CD4-positive, alpha-beta T cell (primary cell): ENCODE measurements at regions of chr1 and their contacts with region 1.

Region 1: GRCh38 chr1:76154206-76154956 is 79.8 kb downstream of the ST6GALNAC3 start:
- DNase-seq: peak; percentile 64 to 86 (median 76)
- ATAC-seq: peak; percentile 93
- H3K4me3 ChIP-seq: peak overlapping the region; percentile 59
- H3K4me3 Mint-ChIP-seq: peak overlapping the region; percentile 85
- H3K27ac ChIP-seq: peak overlapping the region in 1 of 2 donors; percentile 52
- H3K27ac Mint-ChIP-seq: peak overlapping the region; percentile 67
- H3K4me1 ChIP-seq: peaks cover 9% of the 10 kb centered on the region
- H3K4me1 Mint-ChIP-seq: peaks cover 12% of the 10 kb centered on the region
- H3K27me3 ChIP-seq: no peaks in the 10 kb centered on the region
- H3K27me3 Mint-ChIP-seq: peaks cover 5% of the 10 kb centered on the region
- CTCF ChIP-seq: peak; percentile 90

Region 2: GRCh38 chr1:74771913-74772515 is 1382.4 kb before region 1 on chr1:
- CTCF ChIA-PET with region 1: no interaction called
- POLR2A ChIA-PET with region 1: no interaction called
- intact Hi-C with region 1: loop called in 1 of 2 experiments (anchors 5 kb)
- DNase-seq: peak in 3 of 14 experiments; percentile 31 to 43 (median 41)
- ATAC-seq: peak; percentile 49
- H3K4me3 ChIP-seq: no peak overlapping the region
- H3K4me3 Mint-ChIP-seq: no peak overlapping the region
- H3K27ac ChIP-seq: no peak overlapping the region
- H3K27ac Mint-ChIP-seq: no peak overlapping the region
- H3K4me1 ChIP-seq: no peaks in the 10 kb centered on the region
- H3K4me1 Mint-ChIP-seq: no peaks in the 10 kb centered on the region
- H3K27me3 ChIP-seq: peaks cover 0 to 11% of the 10 kb centered on the region in 2 experiments
- H3K27me3 Mint-ChIP-seq: peaks cover 29% of the 10 kb centered on the region
- CTCF ChIP-seq: peak; percentile 82

Region 3: GRCh38 chr1:76330991-76331603 is 176.7 kb after region 1 on chr1:
- CTCF ChIA-PET with region 1: no interaction called
- POLR2A ChIA-PET with region 1: no interaction called
- intact Hi-C with region 1: loop called in 1 of 2 experiments (anchors 1 kb)
- DNase-seq: peak in 7 of 14 experiments; percentile 1 to 59 (median 43)
- ATAC-seq: peak; percentile 74
- H3K4me3 ChIP-seq: no peak overlapping the region
- H3K4me3 Mint-ChIP-seq: no peak overlapping the region
- H3K27ac ChIP-seq: no peak overlapping the region
- H3K27ac Mint-ChIP-seq: no peak overlapping the region
- H3K4me1 ChIP-seq: no peaks in the 10 kb centered on the region
- H3K4me1 Mint-ChIP-seq: peaks cover 25% of the 10 kb centered on the region
- H3K27me3 ChIP-seq: no peaks in the 10 kb centered on the region
- H3K27me3 Mint-ChIP-seq: no peaks in the 10 kb centered on the region
- CTCF ChIP-seq: peak; percentile 92

Region 4: DNA sequence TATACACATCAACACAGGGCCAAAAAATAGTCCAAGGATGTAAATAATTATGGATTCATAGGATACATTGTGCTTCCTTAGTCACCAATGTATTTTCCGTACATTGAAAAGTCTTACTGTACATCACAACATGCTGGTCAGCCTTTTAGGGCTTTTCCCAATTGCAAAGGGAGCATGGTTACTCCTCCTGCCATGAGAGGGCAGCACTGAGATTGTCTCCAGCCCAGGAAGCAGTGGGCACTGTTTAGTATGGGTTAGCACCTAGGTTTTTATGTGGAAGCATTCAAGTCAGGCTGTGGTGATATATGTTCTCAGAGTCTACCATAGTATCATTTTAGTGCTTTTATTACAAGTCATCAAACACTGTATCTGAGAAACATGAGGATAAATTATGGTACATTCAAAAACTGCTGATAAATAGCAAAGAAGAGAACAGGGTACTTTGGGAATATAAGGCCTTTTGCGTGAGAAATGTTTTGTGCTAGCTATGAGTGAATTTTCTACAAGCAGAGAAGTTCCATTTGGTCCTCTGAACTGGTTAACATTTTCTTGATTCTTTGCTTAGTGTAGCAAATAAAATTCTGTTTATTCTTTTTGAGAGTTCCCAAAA is 746.9 kb after region 1 on chr1:
- CTCF ChIA-PET with region 1: no interaction called
- POLR2A ChIA-PET with region 1: no interaction called
- intact Hi-C with region 1: loop called in 1 of 2 experiments (anchors 1 kb)
- DNase-seq: peak in 6 of 14 experiments; percentile 0 to 60 (median 33)
- ATAC-seq: no peak
- H3K4me3 ChIP-seq: no peak overlapping the region
- H3K4me3 Mint-ChIP-seq: no peak overlapping the region
- H3K27ac ChIP-seq: no peak overlapping the region
- H3K27ac Mint-ChIP-seq: no peak overlapping the region
- H3K4me1 ChIP-seq: no peaks in the 10 kb centered on the region
- H3K4me1 Mint-ChIP-seq: no peaks in the 10 kb centered on the region
- H3K27me3 ChIP-seq: no peaks in the 10 kb centered on the region
- H3K27me3 Mint-ChIP-seq: peaks cover 4% of the 10 kb centered on the region
- CTCF ChIP-seq: peak; percentile 70

Region 5: GRCh38 chr1:77143529-77144121 is 989.2 kb after region 1 on chr1:
- CTCF ChIA-PET with region 1: no interaction called
- POLR2A ChIA-PET with region 1: no interaction called
- intact Hi-C with region 1: loop called (anchors 1 to 2 kb)
- DNase-seq: peak in 3 of 14 experiments; percentile 27 to 29 (median 28)
- ATAC-seq: no peak
- H3K4me3 ChIP-seq: no peak overlapping the region
- H3K4me3 Mint-ChIP-seq: no peak overlapping the region
- H3K27ac ChIP-seq: no peak overlapping the region
- H3K27ac Mint-ChIP-seq: no peak overlapping the region
- H3K4me1 ChIP-seq: no peaks in the 10 kb centered on the region
- H3K4me1 Mint-ChIP-seq: peaks cover 8% of the 10 kb centered on the region
- H3K27me3 ChIP-seq: no peaks in the 10 kb centered on the region
- H3K27me3 Mint-ChIP-seq: no peaks in the 10 kb centered on the region
- CTCF ChIP-seq: peak; percentile 53

Region 6: DNA sequence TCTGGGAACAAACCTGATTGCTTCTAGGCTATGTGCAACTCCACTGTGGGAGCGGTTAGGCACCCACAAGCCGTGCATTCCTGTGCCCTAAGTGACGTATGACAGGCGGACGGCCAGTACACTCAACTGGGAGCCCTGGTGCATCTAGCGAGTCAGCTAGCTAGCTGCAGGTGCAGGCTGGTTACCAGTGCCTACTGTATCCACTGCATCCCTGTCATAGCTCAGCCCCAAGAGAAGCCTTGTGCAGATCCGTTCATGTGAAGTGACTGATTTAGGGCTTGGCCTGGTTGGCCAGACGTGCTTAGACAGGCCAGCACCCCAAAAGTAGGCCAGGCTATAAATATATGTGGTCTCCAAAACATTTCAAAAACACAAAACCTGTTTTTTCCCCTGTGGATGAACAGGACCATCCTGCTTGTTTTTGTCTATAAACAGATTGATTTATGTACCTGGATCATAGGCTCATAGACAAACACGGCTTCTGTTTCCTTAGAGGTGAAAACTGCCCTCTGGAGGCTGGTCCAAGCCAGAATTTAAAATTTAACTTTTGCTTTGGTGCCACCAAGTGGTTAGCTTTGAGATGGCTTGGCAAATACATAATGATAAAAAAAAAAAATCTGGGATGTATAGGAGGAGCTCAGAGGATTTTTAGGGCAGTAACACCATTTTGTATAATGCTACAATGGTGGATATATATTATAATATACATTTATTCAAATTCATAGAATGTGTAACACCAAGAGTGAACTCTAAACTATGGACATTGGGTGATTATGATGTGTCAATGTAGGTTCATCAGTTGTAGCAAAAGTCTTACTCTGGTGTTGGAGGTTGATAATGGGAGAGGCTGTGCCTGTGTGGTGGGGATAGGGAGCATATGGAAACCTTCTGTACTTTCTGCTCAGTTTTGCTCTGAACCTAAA is 1959.9 kb after region 1 on chr1:
- CTCF ChIA-PET with region 1: no interaction called
- POLR2A ChIA-PET with region 1: no interaction called
- intact Hi-C with region 1: loop called (anchors 1 to 5 kb)
- DNase-seq: peak; percentile 12 to 79 (median 36)
- ATAC-seq: peak; percentile 96
- H3K4me3 ChIP-seq: no peak overlapping the region
- H3K4me3 Mint-ChIP-seq: no peak overlapping the region
- H3K27ac ChIP-seq: no peak overlapping the region
- H3K27ac Mint-ChIP-seq: no peak overlapping the region
- H3K4me1 ChIP-seq: no peaks in the 10 kb centered on the region
- H3K4me1 Mint-ChIP-seq: no peaks in the 10 kb centered on the region
- H3K27me3 ChIP-seq: no peaks in the 10 kb centered on the region
- H3K27me3 Mint-ChIP-seq: no peaks in the 10 kb centered on the region
- CTCF ChIP-seq: peak; percentile 97